Activated B cell treated with CpG ODN at 0.5 μM for 24 hours (primary cell): ENCODE measurements at regions of chr21 and their contacts with region 1.

Region 1: DNA sequence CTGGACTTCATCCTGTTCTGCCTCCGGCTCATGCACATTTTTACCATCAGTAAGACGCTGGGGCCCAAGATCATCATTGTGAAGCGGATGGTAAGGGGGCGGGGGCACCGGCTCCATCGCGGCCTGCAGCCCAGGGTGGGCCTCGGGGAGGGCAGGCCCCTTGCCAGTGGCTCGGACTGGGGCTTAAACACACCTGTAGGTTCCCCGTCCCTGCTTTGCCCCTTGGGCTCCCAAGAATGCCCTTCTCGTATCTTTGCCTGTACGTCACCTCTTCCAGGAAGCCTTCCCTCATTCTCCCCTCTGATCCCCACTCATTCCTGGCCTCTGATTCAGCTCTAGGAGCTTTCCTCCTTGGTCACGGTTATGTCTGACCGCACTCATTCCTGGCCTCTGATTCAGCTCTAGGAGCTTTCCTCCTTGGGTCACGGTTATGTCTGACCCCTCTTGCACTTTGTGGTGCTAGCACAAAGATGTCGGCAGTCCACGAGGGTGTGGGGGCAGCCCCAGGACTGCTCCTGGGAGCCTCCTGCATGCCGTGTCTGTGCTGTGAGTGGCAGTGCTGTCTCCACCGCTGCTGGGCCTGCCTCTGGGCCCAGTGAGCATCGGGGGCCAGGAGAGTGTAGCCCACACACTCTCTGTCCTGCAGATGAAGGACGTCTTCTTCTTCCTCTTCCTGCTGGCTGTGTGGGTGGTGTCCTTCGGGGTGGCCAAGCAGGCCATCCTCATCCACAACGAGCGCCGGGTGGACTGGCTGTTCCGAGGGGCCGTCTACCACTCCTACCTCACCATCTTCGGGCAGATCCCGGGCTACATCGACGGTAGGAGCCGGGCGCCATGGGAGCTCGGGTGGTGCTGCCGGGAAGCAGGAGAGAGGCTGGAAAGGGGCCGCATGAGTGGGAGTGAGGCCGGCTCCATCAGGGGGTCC is 49.1 kb upstream of the LRRC3 start:
- DNase-seq: no peak
- ATAC-seq: no peak
- H3K4me3 Mint-ChIP-seq: no peak overlapping the region
- H3K27ac Mint-ChIP-seq: no peak overlapping the region
- H3K4me1 Mint-ChIP-seq: no peaks in the 10 kb centered on the region
- H3K27me3 Mint-ChIP-seq: no peaks in the 10 kb centered on the region
- CTCF ChIP-seq: no peak

Region 2: DNA sequence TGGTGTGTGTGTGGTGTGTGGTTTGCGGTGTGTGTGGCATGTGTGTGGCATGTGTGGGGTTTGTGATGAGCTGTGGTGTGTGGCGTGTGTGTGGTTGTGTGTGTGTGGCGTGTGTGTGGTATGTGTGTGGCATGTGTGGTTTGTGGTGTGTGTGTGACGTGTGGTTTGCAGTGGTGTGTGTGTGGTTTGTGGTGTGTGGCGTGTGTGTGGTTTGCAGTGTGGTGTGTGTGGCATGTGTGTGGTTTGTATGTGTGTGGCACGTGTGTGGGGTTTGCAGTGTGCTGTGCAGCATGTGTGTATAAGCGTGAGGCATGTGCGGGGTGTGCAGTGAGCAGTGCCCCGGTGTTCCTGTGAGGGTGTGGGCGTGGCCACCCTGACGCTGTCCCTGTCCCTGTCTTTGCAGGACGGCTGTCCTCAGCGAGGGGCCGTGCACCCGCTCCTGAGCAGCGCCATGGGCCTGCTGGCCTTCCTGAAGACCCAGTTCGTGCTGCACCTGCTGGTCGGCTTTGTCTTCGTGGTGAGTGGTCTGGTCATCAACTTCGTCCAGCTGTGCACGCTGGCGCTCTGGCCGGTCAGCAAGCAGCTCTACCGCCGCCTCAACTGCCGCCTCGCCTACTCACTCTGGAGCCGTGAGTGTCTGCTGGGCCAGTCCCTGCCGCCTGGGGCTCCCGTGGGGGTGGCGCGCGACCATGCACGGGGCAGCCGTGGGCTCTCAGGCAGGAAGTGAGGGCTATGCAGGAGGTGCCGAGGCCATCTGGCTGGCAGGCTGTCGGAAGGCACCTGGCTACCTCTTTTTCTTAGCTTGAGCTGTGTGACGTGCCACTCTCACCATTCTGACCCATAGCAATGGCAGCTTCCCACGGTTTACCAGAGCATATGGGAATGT is 446.7 kb before region 1 on chr21:
- CTCF ChIA-PET with region 1: no interaction called
- POLR2A ChIA-PET with region 1: interaction called, 13 read pairs
- intact Hi-C with region 1: no loop called
- DNase-seq: no peak
- ATAC-seq: peak; percentile 43
- H3K4me3 Mint-ChIP-seq: no peak overlapping the region
- H3K27ac Mint-ChIP-seq: no peak overlapping the region
- H3K4me1 Mint-ChIP-seq: peaks cover 34% of the 10 kb centered on the region
- H3K27me3 Mint-ChIP-seq: no peaks in the 10 kb centered on the region
- CTCF ChIP-seq: no peak